ENCODE measurements at regions of chr3 and their contacts with region 1.

Region 1: DNA sequence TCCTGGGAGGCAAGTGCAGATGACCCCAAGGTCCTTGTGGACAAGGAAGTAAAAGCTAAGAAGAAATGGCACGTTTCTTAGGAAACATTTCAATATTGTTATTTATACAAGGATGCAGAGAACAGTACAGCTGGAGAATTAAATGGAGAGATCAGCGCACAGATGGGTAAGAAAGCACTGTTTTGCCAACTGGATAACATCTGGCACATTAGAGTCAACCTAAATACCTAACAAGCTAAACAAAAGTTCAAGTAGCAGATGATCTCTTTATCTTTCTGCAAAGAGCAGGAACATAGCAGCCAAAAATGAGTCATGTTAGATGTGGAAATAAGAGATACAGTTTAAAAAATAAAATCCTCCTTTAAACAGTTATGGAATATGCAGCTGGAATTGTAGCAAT is 15.7 kb upstream of the DPPA4 start:
- DNase-seq: no peak
- H3K4me3 ChIP-seq: no peak overlapping the region
- H3K27ac ChIP-seq: no peak overlapping the region
- H3K4me1 ChIP-seq: no peaks in the 10 kb centered on the region
- H3K27me3 ChIP-seq: 0 out of 2 replicates have a peak, but pooled peaks cover 5% of the 10 kb centered on the region
- CTCF ChIP-seq: no peak

Region 2: DNA sequence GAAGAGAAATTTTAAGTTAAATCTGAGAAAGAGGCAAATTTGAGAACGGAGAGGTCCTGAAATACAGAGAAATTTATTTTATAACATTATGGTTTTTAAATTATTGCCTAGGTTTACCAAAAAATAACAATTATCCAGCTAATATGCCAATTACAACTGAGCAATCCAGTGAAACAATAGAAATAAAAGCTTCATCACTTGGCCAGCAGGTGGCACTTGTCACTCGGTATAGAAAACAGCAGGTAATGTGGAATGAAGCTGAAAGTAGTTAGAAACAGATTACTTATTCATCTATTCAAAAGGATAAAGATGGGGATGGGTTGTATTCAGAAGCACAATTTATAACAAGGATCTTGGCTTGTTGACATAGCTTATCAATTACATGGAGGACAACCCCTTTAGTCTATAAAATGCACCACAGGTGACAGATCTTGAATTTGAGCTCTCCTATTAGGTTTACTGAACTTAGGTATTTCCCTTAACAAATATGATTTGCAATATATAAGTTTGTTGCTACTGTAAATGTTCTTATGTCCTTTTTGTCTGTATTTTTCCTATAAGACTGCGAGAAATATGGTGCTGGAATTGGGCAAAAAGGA is 329.3 kb before region 1 on chr3:
- CTCF ChIA-PET with region 1: no interaction called
- POLR2A ChIA-PET with region 1: no interaction called
- intact Hi-C with region 1: no loop called
- DNase-seq: peak in 1 of 2 experiments; percentile 37
- H3K4me3 ChIP-seq: no peak overlapping the region
- H3K27ac ChIP-seq: no peak overlapping the region
- H3K4me1 ChIP-seq: no peaks in the 10 kb centered on the region
- H3K27me3 ChIP-seq: no peaks in the 10 kb centered on the region
- CTCF ChIP-seq: peak; percentile 94

Region 3: DNA sequence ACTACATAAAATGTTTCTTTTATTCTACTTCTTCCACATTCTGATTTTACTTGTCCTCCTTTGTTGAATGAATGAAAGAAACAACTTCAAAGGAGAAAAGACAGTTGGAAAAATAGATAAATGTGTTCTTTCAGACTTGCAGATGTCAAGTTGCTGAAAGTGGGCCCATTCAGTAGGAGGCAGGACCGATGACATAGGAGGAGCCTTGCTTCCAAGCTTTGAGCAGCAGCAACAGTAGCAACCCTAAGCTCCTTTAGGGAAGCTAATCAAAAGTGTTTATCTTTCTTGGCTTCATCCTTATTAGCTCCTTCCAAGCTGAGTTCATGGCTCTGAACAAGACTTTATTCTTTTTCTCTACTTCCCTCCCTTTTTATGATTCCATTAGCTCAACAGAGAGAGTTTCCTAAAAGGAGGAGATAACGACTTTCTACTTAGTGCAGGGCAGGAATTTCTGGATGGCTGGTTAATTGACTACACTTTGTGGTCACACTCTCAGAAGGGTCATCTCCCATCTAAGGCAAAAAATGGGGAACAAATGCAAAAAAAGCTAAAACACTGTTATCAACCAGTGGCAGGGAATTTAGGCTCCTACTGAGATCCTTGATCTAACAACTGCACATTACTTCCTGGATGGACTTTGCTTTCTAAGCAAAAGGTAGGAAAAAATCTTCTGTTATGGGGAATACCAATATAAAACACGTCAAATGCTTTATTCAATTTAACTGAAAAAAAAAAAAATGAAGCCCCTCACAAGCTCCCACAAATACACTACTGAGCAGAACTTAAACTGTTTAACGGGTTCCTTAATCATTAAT is 239.9 kb before region 1 on chr3:
- CTCF ChIA-PET with region 1: no interaction called
- POLR2A ChIA-PET with region 1: no interaction called
- intact Hi-C with region 1: loop called (anchors 5 kb)
- DNase-seq: no peak
- H3K4me3 ChIP-seq: no peak overlapping the region
- H3K27ac ChIP-seq: no peak overlapping the region
- H3K4me1 ChIP-seq: no peaks in the 10 kb centered on the region
- H3K27me3 ChIP-seq: no peaks in the 10 kb centered on the region
- CTCF ChIP-seq: no peak